CD8-positive, alpha-beta memory T cell (primary cell): ENCODE measurements at regions of chr10 and their contacts with region 1.

Region 1: DNA sequence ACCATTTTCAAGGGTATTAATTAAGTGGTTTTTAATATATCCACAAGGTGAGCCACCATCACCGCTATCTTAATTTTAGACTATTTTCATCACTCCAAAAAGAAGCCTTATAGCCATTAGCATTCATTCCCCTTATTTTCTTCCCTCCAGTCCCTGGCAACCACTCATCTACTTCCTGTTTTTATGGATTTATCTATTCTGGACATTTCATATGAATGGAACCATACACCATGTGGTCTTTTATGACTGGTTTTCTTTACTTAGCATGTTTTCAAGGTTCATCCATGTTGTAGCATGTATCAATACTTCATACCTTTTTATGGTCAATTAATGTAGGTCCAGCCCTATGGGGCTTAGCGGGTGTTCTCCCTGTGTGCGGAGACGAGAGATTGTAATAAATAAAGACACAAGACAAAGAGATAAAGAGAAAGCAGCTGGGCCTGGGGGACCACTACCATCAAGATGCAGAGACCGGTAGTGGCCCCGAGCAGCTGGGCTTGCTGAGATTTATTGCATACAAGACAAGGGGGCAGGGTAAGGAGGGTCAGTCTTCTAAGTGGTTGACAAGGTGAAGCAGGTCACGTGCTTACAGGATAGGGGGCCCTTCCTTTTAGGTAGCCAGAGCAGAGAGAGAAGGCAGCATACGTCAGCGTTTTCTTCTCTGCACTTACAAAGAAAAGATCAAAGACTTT is 14.6 kb downstream of the WBP1L start:
- DNase-seq: no peak
- H3K4me3 ChIP-seq: no peak overlapping the region
- H3K4me3 Mint-ChIP-seq: peak overlapping the region in 1 of 7 donors; percentile 8
- H3K27ac ChIP-seq: no peak overlapping the region
- H3K27ac Mint-ChIP-seq: peak overlapping the region in 2 of 8 donors; percentile 10 to 23
- H3K4me1 ChIP-seq: peaks cover 9% of the 10 kb centered on the region
- H3K4me1 Mint-ChIP-seq: peaks cover 28 to 52% (median 36%) of the 10 kb centered on the region in 3 donors
- H3K27me3 ChIP-seq: no peaks in the 10 kb centered on the region
- H3K27me3 Mint-ChIP-seq: no peaks in the 10 kb centered on the region

Region 2: GRCh38 chr10:102384053-102384452 is 374.3 kb before region 1 on chr10:
- CTCF ChIA-PET with region 1: no interaction called
- POLR2A ChIA-PET with region 1: interaction called, 13 read pairs
- DNase-seq: no peak
- H3K4me3 ChIP-seq: no peak overlapping the region
- H3K4me3 Mint-ChIP-seq: no peak overlapping the region
- H3K27ac ChIP-seq: no peak overlapping the region
- H3K27ac Mint-ChIP-seq: peak overlapping the region in 1 of 8 donors; percentile 18
- H3K4me1 ChIP-seq: no peaks in the 10 kb centered on the region
- H3K4me1 Mint-ChIP-seq: no peaks in the 10 kb centered on the region
- H3K27me3 ChIP-seq: no peaks in the 10 kb centered on the region
- H3K27me3 Mint-ChIP-seq: no peaks in the 10 kb centered on the region

Region 3: GRCh38 chr10:102735065-102735562 is 23.3 kb before region 1 on chr10:
- CTCF ChIA-PET with region 1: no interaction called
- POLR2A ChIA-PET with region 1: no interaction called
- DNase-seq: no peak
- H3K4me3 ChIP-seq: no peak overlapping the region
- H3K4me3 Mint-ChIP-seq: no peak overlapping the region
- H3K27ac ChIP-seq: no peak overlapping the region
- H3K27ac Mint-ChIP-seq: peak overlapping the region in 2 of 8 donors; percentile 17 to 92
- H3K4me1 ChIP-seq: no peaks in the 10 kb centered on the region
- H3K4me1 Mint-ChIP-seq: no peaks in the 10 kb centered on the region
- H3K27me3 ChIP-seq: no peaks in the 10 kb centered on the region
- H3K27me3 Mint-ChIP-seq: no peaks in the 10 kb centered on the region